OCI-LY7 (cell line): ENCODE measurements at regions of chr17 and their contacts with region 1.

Region 1: GRCh38 chr17:42019509-42020404 is at the start of gene NKIRAS2:
- DNase-seq: peak; percentile 93
- H3K4me3 ChIP-seq: peak within 1 kb of the TSS; percentile 95
- H3K27ac ChIP-seq: peak within 1 kb of the TSS; percentile 24
- H3K4me1 ChIP-seq: peaks cover 49% of the 10 kb centered on the region
- CTCF ChIP-seq: peak; percentile 86
- total RNA-seq, gene NKIRAS2: 34.8 and 40.2 TPM in 2 replicates

Region 2: GRCh38 chr17:41966463-41967140 is 53.2 kb before region 1 on chr17 and contains the start of gene CNP:
- CTCF ChIA-PET with region 1: interaction called, 4 read pairs
- POLR2A ChIA-PET with region 1: interaction called, 10 read pairs
- intact Hi-C with region 1: loop called (anchors 1 kb)
- DNase-seq: peak; percentile 91
- H3K4me3 ChIP-seq: peak within 1 kb of the TSS; percentile 92
- H3K27ac ChIP-seq: peak within 1 kb of the TSS; percentile 62
- H3K4me1 ChIP-seq: peaks cover 33% of the 10 kb centered on the region
- CTCF ChIP-seq: no peak
- total RNA-seq, gene CNP: 33.8 and 34.1 TPM in 2 replicates

Region 3: GRCh38 chr17:42067351-42068091 is 47.8 kb after region 1 on chr17:
- CTCF ChIA-PET with region 1: no interaction called
- POLR2A ChIA-PET with region 1: interaction called, 5 read pairs
- intact Hi-C with region 1: loop called (anchors 2 kb)
- DNase-seq: peak; percentile 72
- H3K4me3 ChIP-seq: no peak overlapping the region
- H3K27ac ChIP-seq: no peak overlapping the region
- H3K4me1 ChIP-seq: peaks cover 23% of the 10 kb centered on the region
- CTCF ChIP-seq: peak; percentile 99

Region 4: GRCh38 chr17:42183741-42184711 is 164.3 kb after region 1 on chr17:
- CTCF ChIA-PET with region 1: no interaction called
- POLR2A ChIA-PET with region 1: no interaction called
- intact Hi-C with region 1: loop called (anchors 2 kb)
- DNase-seq: peak; percentile 79
- H3K4me3 ChIP-seq: peak overlapping the region; percentile 61
- H3K27ac ChIP-seq: no peak overlapping the region
- H3K4me1 ChIP-seq: peaks cover 27% of the 10 kb centered on the region
- CTCF ChIP-seq: peak; percentile 81

Region 5: GRCh38 chr17:42459256-42459800 is 439.6 kb after region 1 on chr17:
- CTCF ChIA-PET with region 1: no interaction called
- POLR2A ChIA-PET with region 1: no interaction called
- intact Hi-C with region 1: loop called (anchors 5 kb)
- DNase-seq: peak; percentile 59
- H3K4me3 ChIP-seq: peak overlapping the region; percentile 84
- H3K27ac ChIP-seq: peak overlapping the region; percentile 54
- H3K4me1 ChIP-seq: peaks cover 46% of the 10 kb centered on the region
- CTCF ChIP-seq: peak; percentile 94